ENCODE measurements at regions of chr17 and their contacts with region 1.

Region 1: DNA sequence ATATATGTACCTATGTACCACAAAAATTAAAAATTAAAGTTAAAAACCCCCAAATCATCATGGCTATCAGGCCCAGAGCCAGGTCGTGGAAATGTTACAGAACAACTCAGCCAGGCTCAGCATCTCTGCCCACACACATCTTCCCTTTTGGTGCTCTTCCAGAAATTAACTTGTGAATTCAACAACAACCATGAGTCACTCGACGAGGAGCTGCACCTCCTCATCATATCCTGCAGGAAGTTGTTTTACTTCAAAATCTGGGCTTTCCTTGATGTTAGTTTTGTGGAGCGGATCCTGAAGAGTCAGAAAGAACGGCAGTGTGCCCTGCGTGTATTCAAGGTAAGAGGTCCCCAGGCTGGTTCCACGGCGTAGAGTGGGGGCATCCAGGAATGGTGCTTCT is 10.6 kb downstream of the FBXO39 start:
- DNase-seq: no peak
- ATAC-seq: no peak
- H3K4me3 ChIP-seq: no peak overlapping the region
- H3K27ac ChIP-seq: no peak overlapping the region
- H3K4me1 ChIP-seq: peaks cover 29% of the 10 kb centered on the region
- H3K27me3 ChIP-seq: no peaks in the 10 kb centered on the region; a peak in 1 of 5 replicates
- CTCF ChIP-seq: no peak
- EP300 ChIP-seq: no peak
- POLR2A ChIP-seq: no peak
- RAD21 ChIP-seq: no peak

Region 2: DNA sequence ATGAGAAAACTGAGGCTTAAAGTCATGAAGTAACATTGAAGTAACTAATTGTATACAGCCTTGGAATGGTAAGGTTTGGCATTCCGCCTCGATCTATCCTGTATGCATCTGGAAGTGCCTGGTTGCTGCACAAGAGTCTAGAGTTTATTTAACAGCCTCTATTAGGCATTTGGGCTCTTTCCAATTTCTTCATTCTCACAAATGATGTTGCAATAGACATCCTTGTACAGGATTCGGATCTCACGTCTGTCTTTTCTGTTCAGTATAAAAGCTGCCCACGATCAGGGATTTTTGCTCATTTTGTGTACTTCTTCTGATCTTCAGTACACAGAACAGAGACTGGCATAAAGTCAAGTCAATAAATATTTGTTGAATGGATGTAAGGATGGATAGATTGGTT is 452.2 kb before region 1 on chr17:
- CTCF ChIA-PET with region 1: no interaction called
- POLR2A ChIA-PET with region 1: no interaction called
- in situ Hi-C with region 1: no loop called
- intact Hi-C with region 1: no loop called
- DNase-seq: no peak
- ATAC-seq: no peak
- H3K4me3 ChIP-seq: no peak overlapping the region
- H3K27ac ChIP-seq: no peak overlapping the region
- H3K4me1 ChIP-seq: no peaks in the 10 kb centered on the region
- H3K27me3 ChIP-seq: no peaks in the 10 kb centered on the region; a peak in 1 of 5 replicates
- CTCF ChIP-seq: no peak
- EP300 ChIP-seq: no peak
- POLR2A ChIP-seq: no peak
- RAD21 ChIP-seq: no peak

Region 3: GRCh38 chr17:6753006-6753445 is 33.6 kb before region 1 on chr17:
- CTCF ChIA-PET with region 1: no interaction called
- POLR2A ChIA-PET with region 1: no interaction called
- in situ Hi-C with region 1: no loop called
- intact Hi-C with region 1: no loop called
- DNase-seq: peak; percentile 11
- ATAC-seq: no peak
- H3K4me3 ChIP-seq: no peak overlapping the region
- H3K27ac ChIP-seq: peak overlapping the region; percentile 80
- H3K4me1 ChIP-seq: peaks cover 48% of the 10 kb centered on the region
- H3K27me3 ChIP-seq: no peaks in the 10 kb centered on the region
- CTCF ChIP-seq: no peak
- EP300 ChIP-seq: no peak
- POLR2A ChIP-seq: no peak
- RAD21 ChIP-seq: no peak

Region 4: GRCh38 chr17:6796887-6797490 is 10.4 kb after region 1 on chr17:
- CTCF ChIA-PET with region 1: no interaction called
- POLR2A ChIA-PET with region 1: interaction called, 10 read pairs
- in situ Hi-C with region 1: no loop called
- intact Hi-C with region 1: no loop called
- DNase-seq: no peak
- ATAC-seq: no peak
- H3K4me3 ChIP-seq: peak overlapping the region in 2 of 3 experiments; percentile 42 to 52; a peak in 2 of 6 replicates
- H3K27ac ChIP-seq: peak overlapping the region; percentile 78
- H3K4me1 ChIP-seq: peaks cover 54% of the 10 kb centered on the region
- H3K27me3 ChIP-seq: no peaks in the 10 kb centered on the region
- CTCF ChIP-seq: no peak
- EP300 ChIP-seq: no peak
- POLR2A ChIP-seq: no peak
- RAD21 ChIP-seq: no peak

Region 5: DNA sequence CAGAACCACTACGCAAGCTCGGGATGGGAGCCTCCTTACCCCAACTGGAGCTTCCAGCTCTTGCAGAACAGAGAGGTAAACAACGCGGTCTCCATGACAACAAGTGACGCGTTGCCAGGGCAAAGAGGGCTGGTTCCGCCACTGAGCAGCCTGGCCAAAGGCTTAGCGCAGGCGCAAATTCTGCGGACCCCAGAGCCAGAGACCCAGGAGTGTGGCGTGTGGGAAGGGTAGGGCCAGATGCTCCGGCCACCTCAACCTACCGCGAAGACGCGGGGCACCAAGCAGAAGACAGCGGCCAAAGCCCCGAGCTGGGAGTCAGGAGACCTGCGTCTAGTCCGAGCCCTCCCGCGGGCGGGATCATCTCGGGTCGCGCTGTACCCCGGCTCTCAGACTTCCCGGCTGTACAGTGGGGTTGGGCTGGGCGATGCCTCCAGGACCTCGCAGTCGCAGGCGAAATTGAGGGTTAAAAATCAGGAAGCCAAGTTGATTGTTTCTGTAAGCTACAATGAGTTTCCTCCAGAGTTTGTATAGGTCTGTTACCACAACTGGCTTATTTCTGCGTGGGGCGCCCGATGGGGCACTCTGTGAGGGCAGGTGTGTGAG is 45.1 kb after region 1 on chr17 and contains the start of gene TEKT1:
- CTCF ChIA-PET with region 1: no interaction called
- POLR2A ChIA-PET with region 1: no interaction called
- in situ Hi-C with region 1: no loop called
- intact Hi-C with region 1: loop called (anchors 1 kb)
- DNase-seq: peak; percentile 77
- ATAC-seq: peak; percentile 98
- H3K4me3 ChIP-seq: peak within 1 kb of the TSS; percentile 41 to 73 (median 51); a peak in 5 of 6 replicates
- H3K27ac ChIP-seq: no peak within 1 kb of the TSS
- H3K4me1 ChIP-seq: peaks cover 13% of the 10 kb centered on the region
- H3K27me3 ChIP-seq: peaks cover 1 to 20% of the 10 kb centered on the region in 2 experiments; a peak in 3 of 5 replicates
- CTCF ChIP-seq: no peak
- EP300 ChIP-seq: no peak
- POLR2A ChIP-seq: no peak
- RAD21 ChIP-seq: no peak
- total RNA-seq, gene TEKT1: not detected in 2 replicates

Measured in HepG2 (cell line).